Posterior cingulate gyrus (tissue), 11 donors: ENCODE measurements at regions of chr4 and their contacts with region 1.

Region 1: GRCh38 chr4:53365486-53366300 is at the start of gene SCFD2:
- DNase-seq: peak; percentile 96 to 100 (median 99)

Region 2: DNA sequence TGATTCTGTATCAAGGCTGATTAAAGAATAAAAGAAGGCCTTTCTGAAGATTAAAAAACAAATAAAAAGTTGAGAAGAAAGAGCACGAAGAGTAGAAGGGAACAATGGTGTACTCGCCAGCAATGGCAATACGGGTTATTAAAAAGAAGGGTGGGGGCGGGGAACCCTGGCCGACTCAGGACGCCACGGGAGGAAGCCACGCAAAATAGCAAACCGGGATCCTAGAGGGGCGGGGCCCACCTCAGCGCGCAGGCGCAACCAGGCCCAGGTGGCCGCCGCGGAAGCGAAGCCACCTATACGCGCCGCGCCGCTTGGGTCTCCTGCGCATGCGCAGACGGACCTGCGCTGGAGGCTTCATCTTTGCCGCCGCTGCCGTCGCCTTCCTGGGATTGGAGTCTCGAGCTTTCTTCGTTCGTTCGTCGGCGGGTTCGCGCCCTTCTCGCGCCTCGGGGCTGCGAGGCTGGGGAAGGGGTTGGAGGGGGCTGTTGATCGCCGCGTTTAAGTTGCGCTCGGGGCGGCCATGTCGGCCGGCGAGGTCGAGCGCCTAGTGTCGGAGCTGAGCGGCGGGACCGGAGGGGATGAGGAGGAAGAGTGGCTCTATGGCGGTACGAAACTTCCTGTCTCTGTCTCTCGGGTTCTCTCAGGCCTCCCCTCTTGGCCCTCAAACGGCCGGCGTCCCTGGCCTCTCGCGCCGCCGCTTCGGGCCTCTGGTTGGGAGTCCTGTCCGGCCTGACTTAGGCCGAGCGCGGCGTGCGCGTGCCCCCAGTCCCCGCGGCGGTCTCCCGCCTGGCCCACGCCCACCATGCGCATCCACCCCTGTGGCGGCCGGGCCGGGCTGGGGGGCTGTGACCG is 11.9 kb after region 1 on chr4 and contains the start of gene FIP1L1:
- intact Hi-C with region 1: loop called (anchors 1 kb)
- DNase-seq: peak; percentile 82 to 98 (median 90)

Region 3: GRCh38 chr4:53633608-53634007 is 267.9 kb after region 1 on chr4:
- intact Hi-C with region 1: no loop called
- DNase-seq: no peak